ENCODE measurements at regions of chr14 and their contacts with region 1.

Region 1: GRCh38 chr14:50860478-50861086 is 11.3 kb upstream of the ABHD12B start:
- DNase-seq: peak; percentile 94
- ATAC-seq: peak; percentile 80
- H3K4me3 Mint-ChIP-seq: peak overlapping the region; percentile 76
- H3K27ac Mint-ChIP-seq: peak overlapping the region; percentile 82
- H3K4me1 Mint-ChIP-seq: peaks cover 13% of the 10 kb centered on the region
- H3K27me3 Mint-ChIP-seq: peaks cover 3% of the 10 kb centered on the region

Region 2: GRCh38 chr14:50542941-50543418 is 317.6 kb before region 1 on chr14:
- CTCF ChIA-PET with region 1: interaction called, 11 read pairs
- POLR2A ChIA-PET with region 1: no interaction called
- intact Hi-C with region 1: loop called (anchors 1 kb)
- DNase-seq: peak; percentile 58
- ATAC-seq: peak; percentile 98
- H3K4me3 Mint-ChIP-seq: no peak overlapping the region
- H3K27ac Mint-ChIP-seq: peak overlapping the region; percentile 72
- H3K4me1 Mint-ChIP-seq: peaks cover 16% of the 10 kb centered on the region
- H3K27me3 Mint-ChIP-seq: no peaks in the 10 kb centered on the region

Region 3: GRCh38 chr14:50667996-50668825 is 192.4 kb before region 1 on chr14 and contains the start of gene SAV1:
- CTCF ChIA-PET with region 1: no interaction called
- POLR2A ChIA-PET with region 1: interaction called, 3 read pairs
- intact Hi-C with region 1: loop called in 1 of 2 experiments (anchors 5 kb)
- DNase-seq: peak; percentile 71
- ATAC-seq: peak; percentile 79
- H3K4me3 Mint-ChIP-seq: no peak within 1 kb of the TSS
- H3K27ac Mint-ChIP-seq: peak within 1 kb of the TSS; percentile 80
- H3K4me1 Mint-ChIP-seq: peaks cover 12% of the 10 kb centered on the region
- H3K27me3 Mint-ChIP-seq: no peaks in the 10 kb centered on the region
- total RNA-seq, gene SAV1: 13.6 TPM

Region 4: GRCh38 chr14:50773632-50774541 is 86.7 kb before region 1 on chr14:
- CTCF ChIA-PET with region 1: interaction called, 115 read pairs
- POLR2A ChIA-PET with region 1: interaction called, 3 read pairs
- intact Hi-C with region 1: loop called (anchors 1 to 2 kb)
- DNase-seq: peak; percentile 60
- ATAC-seq: peak; percentile 68
- H3K4me3 Mint-ChIP-seq: no peak overlapping the region
- H3K27ac Mint-ChIP-seq: no peak overlapping the region
- H3K4me1 Mint-ChIP-seq: peaks cover 24% of the 10 kb centered on the region
- H3K27me3 Mint-ChIP-seq: no peaks in the 10 kb centered on the region

Region 5: GRCh38 chr14:50792051-50792477 is 68.5 kb before region 1 on chr14:
- CTCF ChIA-PET with region 1: interaction called, 44 read pairs
- POLR2A ChIA-PET with region 1: interaction called, 3 read pairs
- intact Hi-C with region 1: loop called in 1 of 2 experiments (anchors 1 kb)
- DNase-seq: peak; percentile 37
- ATAC-seq: peak; percentile 58
- H3K4me3 Mint-ChIP-seq: peak overlapping the region; percentile 53
- H3K27ac Mint-ChIP-seq: peak overlapping the region; percentile 91
- H3K4me1 Mint-ChIP-seq: peaks cover 72% of the 10 kb centered on the region
- H3K27me3 Mint-ChIP-seq: no peaks in the 10 kb centered on the region

Region 6: DNA sequence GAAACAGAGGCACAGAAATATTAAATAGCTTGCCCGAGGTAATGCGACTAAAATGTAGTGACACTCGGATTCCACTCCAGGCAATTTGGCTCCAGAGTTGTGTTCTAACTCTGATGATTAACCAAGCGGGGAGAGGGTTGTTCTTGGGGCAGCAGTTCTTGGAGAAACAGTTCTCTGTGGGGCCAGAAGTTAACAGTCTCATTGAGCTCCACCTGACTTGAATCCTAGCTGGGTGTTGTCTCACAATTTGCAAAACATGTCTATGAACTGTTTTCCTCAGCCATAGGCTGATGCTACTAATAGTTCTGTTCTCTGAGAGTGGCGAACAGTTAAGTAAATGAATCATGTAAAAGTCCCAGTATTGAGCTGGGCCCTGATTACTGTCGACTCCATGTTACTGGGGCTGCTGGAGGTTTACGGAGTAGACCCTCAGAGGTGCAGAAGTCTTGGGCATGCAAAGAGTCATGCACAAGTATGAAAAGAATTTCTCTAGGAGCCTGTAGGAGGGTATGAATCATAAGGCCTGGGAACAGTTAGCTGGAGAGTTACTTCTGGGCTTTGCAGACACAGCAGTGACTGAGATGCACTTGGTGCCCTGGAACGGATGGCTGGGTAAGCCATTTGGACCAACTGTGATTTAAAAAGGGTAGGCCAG is 14.2 kb before region 1 on chr14:
- CTCF ChIA-PET with region 1: interaction called, 27 read pairs
- POLR2A ChIA-PET with region 1: no interaction called
- intact Hi-C with region 1: no loop called
- DNase-seq: no peak
- ATAC-seq: no peak
- H3K4me3 Mint-ChIP-seq: no peak overlapping the region
- H3K27ac Mint-ChIP-seq: no peak overlapping the region
- H3K4me1 Mint-ChIP-seq: no peaks in the 10 kb centered on the region
- H3K27me3 Mint-ChIP-seq: no peaks in the 10 kb centered on the region